AG04449 (cell line): ENCODE measurements at regions of chr3 and their contacts with region 1.

Region 1: GRCh38 chr3:69120879-69121464 is 1.4 kb downstream of the LMOD3 start:
- DNase-seq: peak; percentile 31
- H3K4me3 ChIP-seq: no peak overlapping the region
- CTCF ChIP-seq: peak; percentile 85

Region 2: DNA sequence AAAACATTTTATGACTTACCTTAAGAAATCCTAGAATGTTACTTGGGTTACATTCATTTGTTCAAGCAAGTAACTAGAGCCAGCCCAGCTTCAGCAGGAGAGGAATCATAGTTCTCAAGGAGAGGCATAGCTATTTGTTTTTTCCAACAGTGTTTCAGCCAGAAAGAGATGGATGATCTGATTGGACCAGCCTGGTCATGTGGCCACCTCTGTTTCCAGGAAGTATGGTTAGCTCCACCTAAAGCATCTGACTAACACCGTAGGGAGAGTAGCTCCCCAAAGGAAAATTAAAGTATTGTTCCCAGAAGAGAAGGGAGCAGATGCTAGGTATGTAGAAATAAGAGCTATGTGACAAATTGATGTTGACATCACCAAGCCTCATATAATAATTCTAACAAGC is 605.7 kb before region 1 on chr3:
- CTCF ChIA-PET with region 1: no interaction called
- POLR2A ChIA-PET with region 1: no interaction called
- DNase-seq: no peak
- H3K4me3 ChIP-seq: no peak overlapping the region
- CTCF ChIP-seq: no peak

Region 3: DNA sequence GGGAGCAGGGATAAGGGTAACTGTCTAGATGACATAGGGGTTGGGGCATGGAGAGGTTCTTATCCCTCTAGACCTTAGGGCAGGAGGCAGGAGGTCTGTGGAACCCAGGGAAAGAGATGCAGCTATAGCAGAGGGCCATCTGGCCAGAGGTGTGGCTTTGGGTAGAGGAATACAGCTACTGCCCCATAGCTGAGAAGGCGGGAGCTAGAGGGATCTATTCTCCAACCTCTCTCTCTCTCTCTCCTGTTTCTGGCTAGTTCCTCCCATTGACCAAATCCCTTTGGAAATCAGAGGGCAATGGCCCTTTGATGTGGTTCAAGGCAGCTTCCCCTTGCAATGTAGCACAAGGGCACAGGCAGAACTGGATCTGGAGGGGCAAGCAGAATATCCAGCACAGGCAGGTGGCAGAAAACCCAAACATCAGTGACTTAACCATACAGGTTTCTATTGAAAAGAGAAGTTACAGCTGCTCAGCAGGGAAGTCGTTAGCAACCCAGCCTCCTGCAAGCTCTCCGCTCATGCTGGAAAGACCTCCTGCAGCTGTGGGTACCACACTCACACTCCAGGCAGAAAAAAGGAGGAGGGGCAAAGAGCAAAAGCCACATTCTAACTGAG is 23.8 kb after region 1 on chr3:
- CTCF ChIA-PET with region 1: interaction called, 12 read pairs
- POLR2A ChIA-PET with region 1: no interaction called
- DNase-seq: no peak
- H3K4me3 ChIP-seq: no peak overlapping the region
- CTCF ChIP-seq: no peak

Region 4: DNA sequence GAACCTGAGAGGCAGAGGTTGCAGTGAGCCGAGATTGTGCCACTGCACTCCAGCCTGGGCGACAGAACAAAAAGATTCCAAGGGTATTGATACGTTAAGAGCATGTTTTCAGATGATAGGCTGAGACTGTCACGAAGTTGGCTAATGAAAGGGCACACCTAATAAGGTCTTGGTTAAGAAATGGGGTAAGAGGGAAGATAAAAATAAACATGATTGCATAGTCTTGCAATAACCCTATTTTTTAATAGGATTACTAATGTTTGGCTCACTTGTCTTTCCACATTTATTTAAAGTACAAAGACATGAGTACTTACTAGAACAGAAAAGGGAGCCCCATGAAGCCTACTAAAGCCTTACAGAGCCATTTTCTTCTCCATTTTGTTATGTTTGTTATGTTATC is 155.9 kb after region 1 on chr3:
- CTCF ChIA-PET with region 1: no interaction called
- POLR2A ChIA-PET with region 1: no interaction called
- DNase-seq: no peak
- H3K4me3 ChIP-seq: no peak overlapping the region
- CTCF ChIP-seq: no peak

Region 5: DNA sequence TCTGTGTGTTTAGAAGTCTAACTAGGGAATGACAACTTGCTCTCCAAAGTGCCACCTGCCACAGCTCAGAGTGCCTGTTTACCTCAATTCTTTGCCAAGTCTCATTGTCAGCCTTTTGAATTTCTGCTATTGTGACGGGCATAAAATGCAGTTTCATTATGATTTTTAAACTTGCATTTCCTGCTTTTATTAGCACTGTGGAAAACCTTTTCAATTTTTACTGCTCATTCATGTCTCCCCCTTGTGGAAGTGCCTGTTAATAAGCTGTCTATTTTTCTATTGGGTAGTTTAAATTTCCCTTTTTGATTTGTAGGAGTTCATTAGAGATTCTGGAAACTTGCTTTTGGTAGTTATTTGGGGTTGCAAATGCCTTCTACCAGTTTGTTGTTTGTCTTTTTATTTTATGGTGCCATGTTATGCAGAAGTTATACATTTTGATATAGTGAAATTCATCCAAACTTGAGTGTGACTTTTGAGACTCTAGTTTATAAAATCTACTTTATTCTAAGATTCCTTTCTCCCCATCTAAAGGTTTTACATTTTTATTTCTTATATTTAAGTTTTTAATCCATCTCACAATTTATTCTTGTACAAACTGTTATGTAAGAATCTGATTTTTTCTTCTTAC is 318.8 kb after region 1 on chr3:
- CTCF ChIA-PET with region 1: interaction called, 18 read pairs
- POLR2A ChIA-PET with region 1: no interaction called
- DNase-seq: no peak
- H3K4me3 ChIP-seq: no peak overlapping the region
- CTCF ChIP-seq: peak; percentile 38

Region 6: DNA sequence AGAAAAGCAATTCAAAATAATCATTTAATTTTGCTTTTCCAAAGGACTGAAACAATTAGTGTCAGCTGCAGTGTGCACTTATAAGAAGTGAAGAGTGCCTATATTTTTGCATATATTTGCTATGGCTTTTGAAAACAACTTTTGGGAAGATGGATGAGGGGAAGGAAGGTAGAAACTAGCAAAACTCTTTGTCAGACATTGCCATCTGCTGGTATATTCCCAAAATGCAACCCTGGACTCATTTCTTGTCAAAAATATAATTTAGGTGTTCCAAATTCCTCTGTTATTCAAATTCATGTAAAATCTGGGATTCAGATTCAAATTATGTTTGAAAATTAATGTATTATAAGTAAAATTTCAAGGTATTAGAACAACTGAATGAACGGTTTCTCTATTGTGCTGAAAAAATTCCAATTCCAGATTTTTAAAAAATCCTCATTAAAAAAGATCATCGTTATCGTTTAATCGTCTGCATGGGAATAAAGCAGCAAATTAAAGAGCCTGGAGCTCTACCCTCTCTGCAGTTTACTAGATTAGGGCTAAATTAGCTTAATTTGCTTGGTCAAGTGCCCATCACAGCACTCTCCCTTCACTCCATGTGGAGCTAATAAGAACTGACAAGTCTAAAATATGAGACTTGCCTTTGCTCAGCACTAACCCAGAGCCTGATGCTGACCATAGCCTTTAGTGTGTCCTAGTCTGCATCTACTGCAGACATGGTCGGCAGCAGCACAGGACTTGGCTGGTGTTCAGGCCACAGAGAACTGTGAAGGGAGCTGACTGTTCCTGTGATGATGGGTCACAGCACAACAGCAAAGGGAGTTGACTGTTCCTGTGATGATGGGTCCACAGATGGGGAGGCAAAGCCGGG is 550.3 kb after region 1 on chr3:
- CTCF ChIA-PET with region 1: interaction called, 14 read pairs
- POLR2A ChIA-PET with region 1: no interaction called
- DNase-seq: no peak
- H3K4me3 ChIP-seq: no peak overlapping the region
- CTCF ChIP-seq: peak; percentile 46